ENCODE measurements at regions of chr20 and their contacts with region 1.

Region 1: GRCh38 chr20:50690634-50691572 is at the start of gene RIPOR3:
- DNase-seq: peak in 1 of 2 experiments; percentile 67
- H3K4me3 ChIP-seq: peak within 1 kb of the TSS; percentile 31 to 64 (median 50)
- H3K27ac ChIP-seq: no peak within 1 kb of the TSS
- H3K4me1 ChIP-seq: peaks cover 16 to 24% (median 18%) of the 10 kb centered on the region in 4 experiments
- H3K27me3 ChIP-seq: 0 out of 7 replicates have a peak, but pooled peaks cover 0 to 2% (median 0%) of the 10 kb centered on the region in 4 experiments
- CTCF ChIP-seq: no peak
- EP300 ChIP-seq: no peak
- POLR2A ChIP-seq: no peak
- RAD21 ChIP-seq: no peak
- total RNA-seq, gene RIPOR3: 4.5 and 4.7 TPM in 2 replicates

Region 2: DNA sequence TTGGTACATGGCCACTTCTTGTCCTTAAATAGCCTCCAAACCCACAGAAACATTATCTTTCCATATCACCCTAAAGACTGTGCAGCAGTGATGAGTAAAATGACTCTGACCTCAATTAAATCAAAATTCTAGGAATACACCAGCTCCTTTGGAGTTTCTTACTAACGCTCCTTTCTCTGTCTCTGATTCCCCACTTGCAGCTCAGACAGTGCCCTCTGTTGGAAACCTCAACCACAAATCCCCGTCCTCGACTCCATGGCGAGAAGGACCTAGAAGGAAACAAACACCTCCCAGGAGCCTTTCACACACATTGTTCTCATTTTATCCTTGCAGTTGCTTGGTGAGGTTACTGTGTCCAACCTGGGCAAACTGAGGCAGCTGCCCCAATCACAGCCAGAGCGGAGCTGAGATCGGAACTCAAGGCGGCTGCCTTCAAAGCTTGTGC is 22.8 kb after region 1 on chr20:
- CTCF ChIA-PET with region 1: interaction called, 14 read pairs
- POLR2A ChIA-PET with region 1: interaction called, 3 read pairs
- DNase-seq: peak in 1 of 2 experiments; percentile 56
- H3K4me3 ChIP-seq: no peak overlapping the region
- H3K27ac ChIP-seq: no peak overlapping the region
- H3K4me1 ChIP-seq: peaks cover 0 to 3% (median 2%) of the 10 kb centered on the region in 4 experiments; a peak in 1 of 7 replicates
- H3K27me3 ChIP-seq: no peaks in the 10 kb centered on the region
- CTCF ChIP-seq: peak; percentile 46 to 68 (median 66)
- EP300 ChIP-seq: no peak
- POLR2A ChIP-seq: no peak
- RAD21 ChIP-seq: peak; percentile 65 to 76

Region 3: GRCh38 chr20:50879649-50880550 is 189.0 kb after region 1 on chr20:
- CTCF ChIA-PET with region 1: no interaction called
- POLR2A ChIA-PET with region 1: no interaction called
- DNase-seq: no peak
- H3K4me3 ChIP-seq: no peak overlapping the region
- H3K27ac ChIP-seq: no peak overlapping the region
- H3K4me1 ChIP-seq: peaks cover 0 to 5% (median 0%) of the 10 kb centered on the region in 4 experiments; a peak in 1 of 7 replicates
- H3K27me3 ChIP-seq: no peaks in the 10 kb centered on the region
- CTCF ChIP-seq: no peak
- EP300 ChIP-seq: no peak
- POLR2A ChIP-seq: peak in 1 of 2 experiments; percentile 26; a peak in 1 of 3 replicates
- RAD21 ChIP-seq: no peak

Measured in H1 (cell line).